GM10248 (cell line): ENCODE measurements at regions of chr4 and their contacts with region 1.

Region 1: GRCh38 chr4:121192480-121192879 is 28.4 kb upstream of the TNIP3 start:
- DNase-seq: peak; percentile 24
- CTCF ChIP-seq: peak; percentile 69

Region 2: GRCh38 chr4:121182296-121182695 is 10.2 kb before region 1 on chr4:
- CTCF ChIA-PET with region 1: interaction called, 61 read pairs
- POLR2A ChIA-PET with region 1: no interaction called
- DNase-seq: no peak
- CTCF ChIP-seq: no peak

Region 3: GRCh38 chr4:121219227-121219626 is 26.7 kb after region 1 on chr4:
- CTCF ChIA-PET with region 1: interaction called, 30 read pairs
- POLR2A ChIA-PET with region 1: no interaction called
- DNase-seq: no peak
- CTCF ChIP-seq: no peak

Region 4: GRCh38 chr4:121243485-121243884 is 51.0 kb after region 1 on chr4:
- CTCF ChIA-PET with region 1: interaction called, 144 read pairs
- POLR2A ChIA-PET with region 1: no interaction called
- DNase-seq: no peak
- CTCF ChIP-seq: no peak

Region 5: GRCh38 chr4:121272526-121272925 is 80.0 kb after region 1 on chr4:
- CTCF ChIA-PET with region 1: interaction called, 12 read pairs
- POLR2A ChIA-PET with region 1: no interaction called
- DNase-seq: no peak
- CTCF ChIP-seq: no peak

Region 6: DNA sequence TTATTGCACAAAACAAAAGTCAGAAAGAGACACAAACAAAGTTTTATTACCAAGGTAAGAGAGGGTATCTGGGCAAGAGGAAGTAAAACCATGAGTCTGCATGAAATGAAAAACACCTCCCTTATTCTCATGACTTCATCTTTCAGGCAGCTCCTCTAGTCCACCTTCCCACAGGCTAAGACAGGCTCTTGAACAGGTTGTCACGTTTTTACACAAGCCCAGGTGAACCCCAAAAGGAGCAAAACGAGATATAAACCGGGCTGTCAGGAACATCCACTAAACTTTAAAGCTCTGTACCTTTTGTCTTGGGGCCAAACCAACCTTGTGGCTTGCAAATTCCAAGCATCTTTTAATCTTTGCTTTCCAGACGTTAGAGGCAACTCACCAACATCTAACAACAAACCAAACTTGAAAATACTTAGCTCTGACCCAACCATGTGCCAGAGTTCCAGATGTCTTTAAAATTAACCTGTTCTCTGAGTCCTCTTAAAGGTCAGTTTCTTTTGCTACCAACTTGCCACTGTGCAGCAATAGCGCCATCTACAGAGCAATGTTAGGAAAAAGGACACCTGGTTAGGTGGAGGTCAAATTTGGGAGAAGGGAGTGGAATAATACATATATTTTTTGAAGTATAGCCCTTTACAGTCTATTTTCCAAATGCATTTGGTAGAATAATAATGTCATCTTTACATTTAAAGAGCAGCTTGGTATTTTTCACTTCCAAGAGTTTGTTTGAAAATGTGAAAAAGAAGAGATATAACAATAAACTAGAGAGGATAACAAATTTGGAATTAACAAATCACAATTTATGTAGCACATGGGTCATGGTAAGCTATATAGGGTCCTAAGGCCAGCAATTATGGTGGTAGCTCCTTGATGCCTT is 115.2 kb after region 1 on chr4:
- CTCF ChIA-PET with region 1: interaction called, 44 read pairs
- POLR2A ChIA-PET with region 1: no interaction called
- DNase-seq: peak; percentile 56
- CTCF ChIP-seq: peak; percentile 72

Region 7: DNA sequence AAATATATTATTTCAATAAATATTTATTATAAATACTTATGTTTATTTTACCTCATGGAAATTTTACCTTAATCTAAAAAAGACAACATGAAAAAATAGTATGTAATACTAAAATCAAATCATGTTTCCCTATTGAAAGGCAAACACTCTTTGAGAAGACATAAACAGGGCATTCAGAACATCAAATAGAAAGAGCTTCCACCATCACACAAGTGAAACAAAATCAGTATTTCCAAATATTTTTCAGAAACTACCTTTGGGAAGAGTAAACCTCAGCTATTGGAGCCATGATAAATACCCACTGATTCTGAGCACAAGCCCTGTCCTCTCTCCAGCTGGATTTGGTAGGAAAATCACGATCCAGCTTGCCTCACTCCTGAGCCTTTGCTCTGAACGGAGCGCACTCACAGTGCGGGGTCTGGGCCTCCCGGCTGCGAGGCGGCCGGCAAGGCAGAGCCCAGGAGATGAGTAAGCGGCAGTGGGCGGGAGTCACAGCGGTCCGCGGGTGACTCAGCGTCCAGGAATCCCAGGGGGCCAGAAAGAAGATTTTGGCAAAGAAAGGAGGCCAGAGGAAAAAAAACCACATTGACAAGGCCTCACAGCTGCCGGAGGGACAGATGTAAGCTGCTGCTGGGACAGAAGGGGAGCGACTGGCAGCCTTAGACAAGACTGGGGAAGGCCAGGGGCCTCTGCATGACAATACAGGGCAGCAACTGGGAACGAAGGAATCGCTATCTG is 519.0 kb after region 1 on chr4:
- CTCF ChIA-PET with region 1: no interaction called
- POLR2A ChIA-PET with region 1: no interaction called
- DNase-seq: peak; percentile 63
- CTCF ChIP-seq: no peak